Activated CD4-positive, alpha-beta memory T cell treated with anti-CD3 and anti-CD28 coated beads for 36 hours (primary cell): ENCODE measurements at regions of chr10 and their contacts with region 1.

Region 1: GRCh38 chr10:59625721-59626522 is 83.7 kb downstream of the SLC16A9 start:
- DNase-seq: peak; percentile 46
- H3K4me3 Mint-ChIP-seq: no peak overlapping the region
- H3K27ac Mint-ChIP-seq: no peak overlapping the region
- H3K4me1 Mint-ChIP-seq: peaks cover 2% of the 10 kb centered on the region
- H3K27me3 Mint-ChIP-seq: peaks cover 2% of the 10 kb centered on the region

Region 2: GRCh38 chr10:58531084-58531695 is 1094.7 kb before region 1 on chr10:
- CTCF ChIA-PET with region 1: interaction called, 3 read pairs
- POLR2A ChIA-PET with region 1: no interaction called
- intact Hi-C with region 1: loop called (anchors 5 kb)
- DNase-seq: peak; percentile 60
- H3K4me3 Mint-ChIP-seq: no peak overlapping the region
- H3K27ac Mint-ChIP-seq: no peak overlapping the region
- H3K4me1 Mint-ChIP-seq: peaks cover 2% of the 10 kb centered on the region
- H3K27me3 Mint-ChIP-seq: peaks cover 7% of the 10 kb centered on the region

Region 3: GRCh38 chr10:59240582-59241183 is 385.2 kb before region 1 on chr10:
- CTCF ChIA-PET with region 1: no interaction called
- POLR2A ChIA-PET with region 1: no interaction called
- intact Hi-C with region 1: loop called (anchors 1 kb)
- DNase-seq: no peak
- H3K4me3 Mint-ChIP-seq: no peak overlapping the region
- H3K27ac Mint-ChIP-seq: no peak overlapping the region
- H3K4me1 Mint-ChIP-seq: no peaks in the 10 kb centered on the region
- H3K27me3 Mint-ChIP-seq: no peaks in the 10 kb centered on the region

Region 4: GRCh38 chr10:59273445-59273844 is 352.5 kb before region 1 on chr10:
- CTCF ChIA-PET with region 1: no interaction called
- POLR2A ChIA-PET with region 1: no interaction called
- intact Hi-C with region 1: no loop called
- DNase-seq: no peak
- H3K4me3 Mint-ChIP-seq: no peak overlapping the region
- H3K27ac Mint-ChIP-seq: no peak overlapping the region
- H3K4me1 Mint-ChIP-seq: no peaks in the 10 kb centered on the region
- H3K27me3 Mint-ChIP-seq: no peaks in the 10 kb centered on the region

Region 5: GRCh38 chr10:59604451-59604850 is 21.5 kb before region 1 on chr10:
- CTCF ChIA-PET with region 1: no interaction called
- POLR2A ChIA-PET with region 1: no interaction called
- intact Hi-C with region 1: no loop called
- DNase-seq: no peak
- H3K4me3 Mint-ChIP-seq: no peak overlapping the region
- H3K27ac Mint-ChIP-seq: no peak overlapping the region
- H3K4me1 Mint-ChIP-seq: no peaks in the 10 kb centered on the region
- H3K27me3 Mint-ChIP-seq: peaks cover 2% of the 10 kb centered on the region

Region 6: GRCh38 chr10:59808896-59809643 is 183.1 kb after region 1 on chr10:
- CTCF ChIA-PET with region 1: interaction called, 31 read pairs
- POLR2A ChIA-PET with region 1: no interaction called
- intact Hi-C with region 1: loop called (anchors 1 kb)
- DNase-seq: peak; percentile 84
- H3K4me3 Mint-ChIP-seq: no peak overlapping the region
- H3K27ac Mint-ChIP-seq: no peak overlapping the region
- H3K4me1 Mint-ChIP-seq: peaks cover 3% of the 10 kb centered on the region
- H3K27me3 Mint-ChIP-seq: no peaks in the 10 kb centered on the region

Region 7: DNA sequence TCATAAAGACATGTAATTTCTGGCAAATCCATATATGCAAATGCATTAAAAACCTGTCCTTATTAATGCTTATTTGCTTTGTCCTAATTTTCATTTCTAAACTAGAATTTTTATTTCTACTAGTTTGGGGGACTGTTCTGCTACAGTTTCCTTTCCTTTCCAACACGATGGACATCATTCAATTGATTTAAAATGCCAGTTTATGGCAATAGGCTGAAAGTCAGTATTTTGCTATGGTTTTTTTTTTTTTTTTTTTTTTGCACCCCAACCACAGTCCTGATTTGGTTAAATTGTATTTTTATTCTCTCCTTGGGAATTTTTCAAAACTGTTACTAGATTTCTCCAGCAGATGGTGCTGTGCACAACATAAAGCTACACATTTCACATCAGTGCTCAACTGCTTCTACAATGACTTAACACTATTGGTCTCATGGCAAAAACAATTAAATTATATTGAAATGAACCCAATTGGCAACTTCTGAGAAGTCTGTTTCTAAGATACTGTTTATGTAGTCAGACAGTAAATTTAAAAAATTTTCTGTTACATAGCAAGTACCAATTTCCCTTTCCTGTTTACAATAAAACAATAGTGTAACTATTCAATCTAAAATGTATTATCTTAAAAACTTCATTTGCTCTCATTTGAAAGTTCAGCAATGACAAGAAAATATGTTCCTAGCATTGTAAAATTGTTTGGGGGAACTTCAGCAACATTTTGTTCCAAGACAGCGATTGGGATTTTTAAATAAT is 474.3 kb after region 1 on chr10:
- CTCF ChIA-PET with region 1: interaction called, 4 read pairs
- POLR2A ChIA-PET with region 1: no interaction called
- intact Hi-C with region 1: loop called (anchors 10 kb)
- DNase-seq: no peak
- H3K4me3 Mint-ChIP-seq: no peak overlapping the region
- H3K27ac Mint-ChIP-seq: no peak overlapping the region
- H3K4me1 Mint-ChIP-seq: no peaks in the 10 kb centered on the region
- H3K27me3 Mint-ChIP-seq: no peaks in the 10 kb centered on the region